Posterior vena cava (tissue), 2 donors: ENCODE measurements at regions of chrX and their contacts with region 1.

Region 1: GRCh38 chrX:499870-500364 is 113.2 kb upstream of the PPP2R3B start:
- DNase-seq: no peak

Region 2: GRCh38 chrX:404656-405055 is 95.3 kb before region 1 on chrX:
- intact Hi-C with region 1: no loop called
- DNase-seq: no peak

Region 3: GRCh38 chrX:435536-436122 is 64.3 kb before region 1 on chrX:
- intact Hi-C with region 1: loop called in 1 of 2 experiments (anchors 2 kb)
- DNase-seq: peak; percentile 52

Region 4: GRCh38 chrX:555725-556666 is 56.1 kb after region 1 on chrX:
- intact Hi-C with region 1: no loop called
- DNase-seq: peak; percentile 67

Region 5: DNA sequence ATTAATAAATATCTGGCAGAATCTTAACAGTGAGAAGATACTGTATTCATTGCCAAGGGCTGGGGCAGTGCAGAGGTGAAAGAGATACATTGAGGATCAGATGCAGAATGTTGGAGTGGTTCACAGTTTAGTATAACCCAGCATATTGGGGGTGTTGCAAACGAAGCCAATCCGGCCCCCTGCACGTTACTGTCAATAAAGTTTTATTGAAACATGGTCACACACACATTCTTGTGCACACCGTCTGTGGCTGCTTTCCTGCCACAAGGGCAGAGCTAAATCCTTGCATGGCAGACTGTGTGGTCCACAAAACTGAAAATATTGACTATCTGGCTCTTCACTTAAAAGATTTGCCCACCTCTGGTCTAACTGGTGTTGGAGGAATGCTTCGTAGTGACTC is 250.3 kb after region 1 on chrX:
- intact Hi-C with region 1: no loop called
- DNase-seq: peak; percentile 40